Esophagus squamous epithelium (tissue), 5 donors: ENCODE measurements at regions of chr3 and their contacts with region 1.

Region 1: GRCh38 chr3:189790658-189791057 is 159.5 kb downstream of the TP63 start:
- DNase-seq: no peak
- H3K4me3 ChIP-seq: peak overlapping the region; percentile 39 to 63 (median 46)
- H3K27ac ChIP-seq: peak overlapping the region; percentile 67 to 86 (median 82)
- H3K4me1 ChIP-seq: peaks cover 0 to 41% (median 6%) of the 10 kb centered on the region in 3 donors
- H3K27me3 ChIP-seq: no peaks in the 10 kb centered on the region
- CTCF ChIP-seq: no peak
- POLR2A ChIP-seq: no peak

Region 2: GRCh38 chr3:189512039-189512438 is 278.6 kb before region 1 on chr3:
- intact Hi-C with region 1: no loop called
- DNase-seq: no peak
- H3K4me3 ChIP-seq: no peak overlapping the region
- H3K27ac ChIP-seq: peak overlapping the region; percentile 76 to 89 (median 79)
- H3K4me1 ChIP-seq: peaks cover 3 to 54% (median 3%) of the 10 kb centered on the region in 3 donors
- H3K27me3 ChIP-seq: no peaks in the 10 kb centered on the region
- CTCF ChIP-seq: no peak
- POLR2A ChIP-seq: no peak

Region 3: GRCh38 chr3:189947948-189948723 is 157.5 kb after region 1 on chr3:
- intact Hi-C with region 1: loop called (anchors 10 kb)
- DNase-seq: no peak
- H3K4me3 ChIP-seq: no peak overlapping the region
- H3K27ac ChIP-seq: peak overlapping the region in 3 of 4 donors; percentile 68 to 93 (median 69)
- H3K4me1 ChIP-seq: peaks cover 9 to 58% (median 11%) of the 10 kb centered on the region in 3 donors
- H3K27me3 ChIP-seq: no peaks in the 10 kb centered on the region
- CTCF ChIP-seq: peak; percentile 16 to 79 (median 52)
- POLR2A ChIP-seq: no peak